ENCODE measurements at regions of chr1 and their contacts with region 1.

Region 1: GRCh38 chr1:31564134-31564989 is 12.0 kb upstream of the TINAGL1 start:
- DNase-seq: peak in 4 of 10 donors; percentile 40 to 68 (median 58)
- H3K4me3 ChIP-seq: no peak overlapping the region
- H3K27ac ChIP-seq: no peak overlapping the region
- H3K27me3 ChIP-seq: no peaks in the 10 kb centered on the region
- CTCF ChIP-seq: peak; percentile 67 to 96 (median 88)

Region 2: DNA sequence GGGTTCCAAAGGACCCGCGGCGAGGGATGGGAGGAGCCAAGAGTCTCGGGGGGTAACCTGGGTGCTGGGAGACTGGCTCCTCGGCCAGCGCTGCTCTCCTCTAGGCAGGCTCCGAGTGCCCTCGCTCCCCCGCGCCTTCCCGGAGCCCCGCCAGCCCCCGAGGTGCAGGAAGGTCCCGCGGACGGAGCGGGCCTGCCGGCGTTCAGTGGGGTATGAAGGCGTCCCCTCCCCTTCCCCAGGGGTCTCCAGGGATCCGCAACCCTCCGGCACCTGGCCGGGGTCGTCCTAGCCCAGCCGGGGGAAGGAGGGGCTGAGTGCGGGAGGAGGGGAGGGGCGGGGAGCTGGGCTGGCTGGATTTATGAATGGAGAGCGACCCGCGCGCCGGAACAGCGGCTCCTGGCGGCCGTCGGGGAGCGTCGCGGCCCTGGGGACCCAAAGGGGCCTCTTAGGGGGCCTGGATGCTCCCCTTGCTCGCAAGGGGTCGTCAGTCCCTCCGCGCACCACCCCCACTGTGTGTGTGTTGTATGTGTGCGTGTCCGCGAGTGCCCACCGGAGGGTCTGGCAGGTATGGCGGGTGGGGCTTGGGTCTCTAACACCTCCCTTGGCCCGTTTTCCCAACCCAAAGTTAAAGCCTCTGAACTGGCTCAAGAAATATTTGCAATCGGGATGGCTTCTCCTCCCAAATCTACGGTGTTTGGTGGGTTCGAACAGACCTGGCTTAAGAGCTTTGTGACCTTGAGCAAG is 53.7 kb after region 1 on chr1:
- intact Hi-C with region 1: loop called in 1 of 2 experiments (anchors 2 kb)
- DNase-seq: no peak
- H3K4me3 ChIP-seq: peak overlapping the region; percentile 34 to 75 (median 58)
- H3K27ac ChIP-seq: peak overlapping the region in 1 of 59 donors; percentile 13
- H3K27me3 ChIP-seq: peaks cover 0 to 26% (median 5%) of the 10 kb centered on the region in 45 donors
- CTCF ChIP-seq: peak; percentile 13 to 81 (median 68)